ENCODE measurements at regions of chr5 and their contacts with region 1.

Region 1: GRCh38 chr5:80101993-80102392 is 66.8 kb downstream of the THBS4 start:
- DNase-seq: no peak
- H3K4me3 ChIP-seq: no peak overlapping the region
- H3K27ac ChIP-seq: no peak overlapping the region
- H3K4me1 ChIP-seq: no peaks in the 10 kb centered on the region
- H3K27me3 ChIP-seq: no peaks in the 10 kb centered on the region
- CTCF ChIP-seq: no peak
- EP300 ChIP-seq: no peak
- RAD21 ChIP-seq: no peak

Region 2: DNA sequence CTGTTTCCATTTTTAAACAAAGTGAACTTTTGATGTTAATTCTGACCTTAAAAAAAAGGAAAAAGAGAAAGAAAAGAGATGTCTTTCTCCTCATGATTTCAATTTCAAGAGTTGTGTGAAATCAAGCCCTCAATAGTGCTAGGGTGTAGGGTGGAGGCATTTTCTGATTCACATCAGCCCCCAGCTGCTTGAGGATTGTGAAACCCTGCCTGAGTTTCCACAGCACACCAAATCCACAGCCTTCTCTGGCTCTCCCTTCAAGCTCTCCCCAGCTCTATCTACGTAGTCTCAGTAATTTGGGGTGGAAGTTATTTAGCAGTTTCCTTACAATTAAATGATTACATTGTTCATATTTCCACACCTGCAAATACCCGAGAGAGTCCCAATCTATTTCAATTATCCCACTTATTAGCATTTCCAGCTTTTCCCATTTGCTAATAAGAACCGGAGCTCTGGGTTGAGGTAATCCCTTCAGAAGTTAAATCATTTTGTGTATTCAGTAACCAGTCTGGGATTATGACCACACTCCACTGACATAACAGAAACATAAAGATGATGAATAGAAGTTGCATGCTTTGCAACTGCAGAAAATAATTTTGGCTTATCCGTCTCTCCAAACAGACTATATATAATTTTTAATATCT is 165.9 kb before region 1 on chr5:
- CTCF ChIA-PET with region 1: no interaction called
- POLR2A ChIA-PET with region 1: no interaction called
- DNase-seq: no peak
- H3K4me3 ChIP-seq: no peak overlapping the region
- H3K27ac ChIP-seq: no peak overlapping the region
- H3K4me1 ChIP-seq: no peaks in the 10 kb centered on the region
- H3K27me3 ChIP-seq: no peaks in the 10 kb centered on the region
- CTCF ChIP-seq: no peak
- EP300 ChIP-seq: no peak
- RAD21 ChIP-seq: no peak

Region 3: DNA sequence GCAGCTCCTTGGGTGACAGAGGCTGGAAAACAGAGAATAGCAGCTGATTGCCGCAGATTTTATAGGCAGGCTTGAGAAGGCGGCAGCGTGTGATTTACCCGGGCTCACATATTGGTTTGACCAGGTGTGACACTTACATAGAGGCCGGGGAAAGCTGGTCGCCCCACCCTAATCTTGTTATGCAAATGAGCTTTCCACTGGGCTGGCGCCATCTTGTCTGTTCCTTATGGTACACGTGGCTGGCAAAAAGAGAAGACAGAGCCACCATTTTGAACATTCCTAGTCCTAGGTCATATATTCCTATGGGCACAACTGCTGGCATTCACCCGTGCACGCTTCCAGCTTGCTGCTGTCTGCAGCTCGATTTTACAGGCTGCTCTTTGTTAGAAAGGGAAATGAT is 206.5 kb after region 1 on chr5:
- CTCF ChIA-PET with region 1: interaction called, 15 read pairs
- POLR2A ChIA-PET with region 1: no interaction called
- DNase-seq: no peak
- H3K4me3 ChIP-seq: no peak overlapping the region
- H3K27ac ChIP-seq: no peak overlapping the region
- H3K4me1 ChIP-seq: no peaks in the 10 kb centered on the region
- H3K27me3 ChIP-seq: no peaks in the 10 kb centered on the region
- CTCF ChIP-seq: no peak
- EP300 ChIP-seq: no peak
- RAD21 ChIP-seq: no peak

Measured in SK-N-SH (cell line).